Activated CD4-positive, alpha-beta memory T cell treated with anti-CD3 and anti-CD28 coated beads for 36 hours (primary cell): ENCODE measurements at regions of chr21 and their contacts with region 1.

Region 1: GRCh38 chr21:17925000-17925610 is 105.9 kb upstream of the C21orf91 start:
- DNase-seq: peak; percentile 54
- H3K4me3 Mint-ChIP-seq: no peak overlapping the region
- H3K27ac Mint-ChIP-seq: no peak overlapping the region
- H3K4me1 Mint-ChIP-seq: no peaks in the 10 kb centered on the region
- H3K27me3 Mint-ChIP-seq: no peaks in the 10 kb centered on the region

Region 2: DNA sequence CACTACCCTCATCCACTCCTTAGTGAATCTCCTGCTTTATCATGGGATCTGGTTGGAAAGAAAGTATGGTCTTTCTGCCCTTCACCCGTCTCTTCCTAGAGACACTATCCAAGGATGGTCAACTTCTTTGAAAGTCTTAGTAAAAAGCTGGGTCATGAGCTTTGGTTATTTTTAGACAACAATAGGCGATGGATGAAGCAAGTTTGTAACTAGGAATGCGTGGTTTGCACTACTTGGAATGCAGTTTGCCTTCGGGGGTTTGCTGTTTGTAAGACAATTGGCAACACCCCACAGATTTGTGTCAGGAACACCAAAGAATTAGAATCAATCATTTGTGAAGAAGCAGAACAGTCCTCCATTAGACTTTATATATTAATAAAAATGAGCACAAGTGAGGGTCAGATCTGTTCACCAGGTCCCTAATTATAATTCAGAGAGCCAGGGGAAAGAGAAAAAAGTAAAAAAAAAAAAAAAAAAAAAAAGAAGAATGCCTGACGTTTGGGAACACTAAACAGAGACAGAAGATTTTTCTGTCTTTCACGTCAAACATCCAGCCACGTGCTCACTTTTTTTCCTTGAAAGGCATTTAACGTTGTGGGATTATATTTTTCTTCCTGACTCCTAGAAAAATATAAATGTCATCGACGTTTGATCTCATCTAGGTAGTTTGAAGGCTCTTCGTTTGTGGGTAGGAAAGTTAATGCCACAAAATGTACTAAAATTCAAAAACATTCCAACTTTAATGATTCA is 251.7 kb before region 1 on chr21:
- CTCF ChIA-PET with region 1: interaction called, 99 read pairs
- POLR2A ChIA-PET with region 1: no interaction called
- intact Hi-C with region 1: no loop called
- DNase-seq: no peak
- H3K4me3 Mint-ChIP-seq: no peak overlapping the region
- H3K27ac Mint-ChIP-seq: no peak overlapping the region
- H3K4me1 Mint-ChIP-seq: no peaks in the 10 kb centered on the region
- H3K27me3 Mint-ChIP-seq: peaks cover 2% of the 10 kb centered on the region

Region 3: DNA sequence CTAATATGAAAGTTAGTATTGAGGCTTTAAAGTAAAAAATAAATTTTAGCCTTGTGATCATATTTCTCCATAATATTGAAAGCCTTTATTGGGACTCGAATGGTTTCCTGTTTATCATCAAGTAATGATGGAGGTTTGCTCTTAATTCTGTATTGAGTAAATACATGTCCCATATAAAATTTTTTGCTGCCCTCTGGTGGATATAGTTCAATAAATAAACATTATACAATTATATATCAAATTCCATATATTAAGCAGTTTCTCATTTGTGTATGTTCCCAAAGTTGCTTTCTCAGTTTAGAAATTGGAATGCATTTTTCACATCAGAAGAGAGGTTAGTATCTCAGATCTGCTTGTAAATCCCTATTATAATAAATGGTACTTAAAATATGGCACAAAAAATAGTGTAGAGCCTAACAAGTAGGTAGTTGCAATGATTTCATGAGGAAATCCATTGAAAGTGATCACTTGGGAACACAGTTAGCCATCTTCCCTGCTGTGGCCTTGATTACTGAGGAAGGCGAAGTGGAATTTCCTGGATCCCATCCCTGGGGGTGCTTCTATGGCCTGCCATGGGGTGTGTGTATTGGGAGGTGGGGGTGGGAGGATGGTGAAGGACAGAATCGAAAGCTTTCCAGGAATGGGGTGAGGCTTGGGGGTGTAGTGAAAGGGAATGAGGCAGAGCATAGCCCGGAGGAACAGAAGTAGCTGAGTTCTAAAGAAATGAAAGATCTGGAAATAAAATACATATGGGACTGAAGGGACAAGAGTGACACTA is 21.9 kb before region 1 on chr21:
- CTCF ChIA-PET with region 1: interaction called, 17 read pairs
- POLR2A ChIA-PET with region 1: no interaction called
- intact Hi-C with region 1: no loop called
- DNase-seq: no peak
- H3K4me3 Mint-ChIP-seq: no peak overlapping the region
- H3K27ac Mint-ChIP-seq: no peak overlapping the region
- H3K4me1 Mint-ChIP-seq: peaks cover 6% of the 10 kb centered on the region
- H3K27me3 Mint-ChIP-seq: no peaks in the 10 kb centered on the region